Aorta (tissue), 5 donors: ENCODE measurements at regions of chr17 and their contacts with region 1.

Region 1: GRCh38 chr17:41648411-41649195 is 24.2 kb upstream of the KRT17 start:
- DNase-seq: peak; percentile 92 to 97
- ATAC-seq: peak; percentile 95
- H3K4me3 ChIP-seq: no peak overlapping the region
- H3K27ac ChIP-seq: no peak overlapping the region
- H3K4me1 ChIP-seq: peaks cover 0 to 3% of the 10 kb centered on the region in 2 donors
- H3K27me3 ChIP-seq: no peaks in the 10 kb centered on the region

Region 2: DNA sequence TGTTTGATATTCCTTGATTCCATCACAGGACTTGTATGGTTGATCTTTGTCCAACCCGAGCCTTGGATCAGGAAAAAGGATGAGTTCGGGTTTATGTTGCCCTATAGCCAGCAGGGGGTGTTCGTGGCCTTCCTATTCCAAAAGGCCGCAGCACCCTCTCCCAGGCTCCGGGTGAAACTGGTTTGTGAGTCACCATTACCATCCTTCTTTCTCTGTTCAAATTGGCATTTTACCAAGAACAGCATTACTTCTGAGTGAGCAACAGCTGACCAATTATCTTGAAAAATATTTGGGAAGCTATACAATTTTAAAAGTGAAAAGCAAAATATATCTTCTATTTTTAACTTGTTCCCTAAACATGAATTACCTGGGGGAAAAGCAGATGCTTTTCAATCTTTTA is 739.3 kb before region 1 on chr17:
- intact Hi-C with region 1: loop called (anchors 1 to 5 kb)
- DNase-seq: peak; percentile 81 to 87
- ATAC-seq: peak; percentile 95
- H3K4me3 ChIP-seq: no peak overlapping the region
- H3K27ac ChIP-seq: no peak overlapping the region
- H3K4me1 ChIP-seq: peaks cover 0 to 7% of the 10 kb centered on the region in 2 donors
- H3K27me3 ChIP-seq: no peaks in the 10 kb centered on the region

Region 3: GRCh38 chr17:41579484-41580243 is 68.9 kb before region 1 on chr17:
- intact Hi-C with region 1: loop called (anchors 5 kb)
- DNase-seq: peak; percentile 86 to 90
- ATAC-seq: peak; percentile 92
- H3K4me3 ChIP-seq: no peak overlapping the region
- H3K27ac ChIP-seq: no peak overlapping the region
- H3K4me1 ChIP-seq: no peaks in the 10 kb centered on the region
- H3K27me3 ChIP-seq: no peaks in the 10 kb centered on the region

Region 4: GRCh38 chr17:41688699-41689496 is 40.3 kb after region 1 on chr17 and contains the start of gene EIF1:
- intact Hi-C with region 1: no loop called
- DNase-seq: peak; percentile 100
- ATAC-seq: peak; percentile 96
- H3K4me3 ChIP-seq: peak within 1 kb of the TSS; percentile 88 to 91
- H3K27ac ChIP-seq: peak within 1 kb of the TSS; percentile 98 to 100
- H3K4me1 ChIP-seq: no peaks in the 10 kb centered on the region
- H3K27me3 ChIP-seq: no peaks in the 10 kb centered on the region
- total RNA-seq, gene EIF1: 582 to 726 TPM